Activated naive CD4-positive, alpha-beta T cell treated with anti-CD3 and anti-CD28 coated beads for 36 hours (primary cell): ENCODE measurements at regions of chr22 and their contacts with region 1.

Region 1: DNA sequence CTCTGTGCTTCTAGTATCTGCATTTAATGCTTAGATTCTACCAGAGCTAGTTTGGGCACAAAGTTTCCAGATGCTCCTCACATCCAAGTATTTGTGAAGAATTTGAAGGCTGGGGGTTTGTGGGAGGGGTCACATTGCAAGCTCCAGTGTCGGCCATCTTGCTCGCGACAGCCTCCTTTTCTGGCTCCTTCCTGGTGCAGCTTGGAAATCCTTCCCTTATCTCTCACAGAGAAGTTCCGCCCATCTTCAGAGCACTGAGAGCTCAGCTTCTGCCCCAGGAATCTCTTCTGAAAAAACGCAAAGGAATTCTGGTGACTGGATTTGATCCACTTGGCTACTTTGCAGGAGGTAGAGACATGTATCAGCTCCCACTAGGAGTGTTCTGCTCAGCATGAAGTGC is 497.5 kb downstream of the TBC1D22A start:
- DNase-seq: no peak
- H3K4me3 Mint-ChIP-seq: no peak overlapping the region
- H3K27ac Mint-ChIP-seq: no peak overlapping the region
- H3K4me1 Mint-ChIP-seq: no peaks in the 10 kb centered on the region
- H3K27me3 Mint-ChIP-seq: peaks cover 2% of the 10 kb centered on the region

Region 2: DNA sequence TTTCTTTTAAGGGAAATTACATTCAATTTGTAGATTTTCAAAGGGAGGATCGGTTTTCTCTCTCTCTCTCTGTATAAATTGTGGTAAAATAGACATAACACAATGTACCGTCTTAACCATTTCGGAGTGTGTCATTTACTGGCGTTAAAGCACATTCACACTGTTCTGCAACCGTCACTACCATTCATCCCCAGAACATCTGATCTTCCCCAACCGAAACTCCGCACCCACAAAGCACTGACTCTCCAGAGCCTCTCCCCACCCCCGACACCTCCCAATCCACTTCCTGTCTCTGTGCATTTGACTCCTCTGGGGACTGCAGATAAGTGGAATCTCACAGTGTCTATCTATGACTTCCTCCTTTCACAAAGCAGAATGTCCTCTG is 655.7 kb before region 1 on chr22:
- CTCF ChIA-PET with region 1: no interaction called
- intact Hi-C with region 1: no loop called
- DNase-seq: peak; percentile 94
- H3K4me3 Mint-ChIP-seq: peak overlapping the region; percentile 67
- H3K27ac Mint-ChIP-seq: peak overlapping the region; percentile 95
- H3K4me1 Mint-ChIP-seq: peaks cover 15% of the 10 kb centered on the region
- H3K27me3 Mint-ChIP-seq: no peaks in the 10 kb centered on the region

Region 3: GRCh38 chr22:47328550-47329243 is 68.7 kb after region 1 on chr22:
- CTCF ChIA-PET with region 1: no interaction called
- intact Hi-C with region 1: loop called (anchors 5 kb)
- DNase-seq: no peak
- H3K4me3 Mint-ChIP-seq: no peak overlapping the region
- H3K27ac Mint-ChIP-seq: no peak overlapping the region
- H3K4me1 Mint-ChIP-seq: no peaks in the 10 kb centered on the region
- H3K27me3 Mint-ChIP-seq: peaks cover 7% of the 10 kb centered on the region